ENCODE measurements at regions of chr7 and their contacts with region 1.

Region 1: GRCh38 chr7:134140889-134141867 is 14.0 kb downstream of the LRGUK start:
- DNase-seq: peak; percentile 57
- H3K4me3 ChIP-seq: no peak overlapping the region
- H3K27ac ChIP-seq: no peak overlapping the region
- H3K4me1 ChIP-seq: no peaks in the 10 kb centered on the region
- H3K27me3 ChIP-seq: peaks cover 2% of the 10 kb centered on the region in 2 experiments
- CTCF ChIP-seq: peak; percentile 80 to 94
- POLR2A ChIP-seq: no peak

Region 2: DNA sequence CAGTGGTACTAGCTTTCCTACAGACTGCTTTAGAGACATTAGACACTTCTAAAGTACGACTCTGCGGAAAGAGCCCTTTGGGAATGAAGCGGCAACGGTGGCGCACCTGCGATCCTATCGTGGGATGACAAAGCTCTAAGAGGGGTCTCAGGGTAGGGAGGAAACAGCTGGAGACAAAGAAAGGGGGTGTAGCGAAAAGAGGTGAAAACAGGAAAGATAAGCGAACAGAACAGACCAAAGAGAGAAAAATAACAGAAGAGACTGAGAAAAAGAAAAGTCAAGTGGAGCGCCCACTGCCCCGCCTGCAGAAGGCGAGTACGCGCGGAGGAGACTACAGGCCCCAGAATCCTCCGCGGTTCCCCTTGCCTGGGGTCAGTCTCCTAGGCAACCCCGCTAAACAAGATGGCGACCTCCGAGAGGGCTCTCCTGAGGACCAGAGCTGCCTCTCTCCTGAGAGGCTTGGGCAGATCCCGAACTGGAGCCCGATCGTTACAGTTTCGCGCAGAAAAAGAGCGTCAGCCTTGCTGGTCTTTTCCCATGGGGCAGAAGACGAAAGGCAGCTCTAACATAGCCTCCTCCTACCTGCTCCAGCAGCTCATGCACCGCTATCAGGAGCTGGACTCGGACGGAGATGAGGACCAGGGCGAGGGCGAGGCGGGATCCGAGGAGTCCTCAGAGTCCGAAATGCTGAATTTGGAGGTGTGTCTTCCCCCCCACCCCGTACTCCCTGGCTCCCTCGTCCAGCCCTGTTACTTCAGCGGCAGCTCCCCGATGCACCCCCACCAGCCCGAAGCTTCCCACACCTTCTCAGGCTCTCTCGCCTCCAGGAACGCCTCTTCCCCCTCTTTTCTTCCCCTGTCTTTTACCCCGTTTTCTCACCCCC is 14.0 kb before region 1 on chr7 and contains the start of gene LRGUK:
- CTCF ChIA-PET with region 1: interaction called, 39 read pairs
- POLR2A ChIA-PET with region 1: no interaction called
- dilution Hi-C with region 1: no loop called
- intact Hi-C with region 1: no loop called
- DNase-seq: peak; percentile 73
- H3K4me3 ChIP-seq: peak within 1 kb of the TSS; percentile 20 to 62 (median 46)
- H3K27ac ChIP-seq: no peak within 1 kb of the TSS
- H3K4me1 ChIP-seq: no peaks in the 10 kb centered on the region
- H3K27me3 ChIP-seq: peaks cover 11 to 39% of the 10 kb centered on the region in 2 experiments
- CTCF ChIP-seq: no peak
- POLR2A ChIP-seq: no peak
- total RNA-seq, gene LRGUK: 0.11 TPM in 1 of 2 replicates, not detected in the other

Region 3: DNA sequence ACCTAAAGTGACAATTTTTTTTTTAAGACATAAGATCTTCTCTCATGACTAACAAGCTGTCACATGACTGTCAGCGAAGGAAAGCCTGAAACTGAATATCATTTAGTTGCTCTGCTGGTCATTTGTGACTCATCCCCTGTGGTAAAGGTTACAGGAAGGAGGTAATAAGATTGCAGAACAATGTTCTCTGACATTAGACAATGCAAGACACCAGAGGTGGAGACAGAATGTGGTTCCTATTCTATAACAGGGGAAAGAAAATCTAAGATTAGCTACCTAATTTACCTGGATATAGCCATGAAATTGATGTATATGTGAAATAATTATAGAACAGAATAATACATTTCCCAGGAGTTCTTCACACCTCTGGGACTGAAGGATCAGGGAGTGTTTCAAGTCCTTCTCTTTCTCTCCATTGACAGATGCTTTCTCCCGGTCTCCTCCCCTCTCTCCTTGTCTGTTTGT is 33.7 kb after region 1 on chr7:
- CTCF ChIA-PET with region 1: interaction called, 11 read pairs
- POLR2A ChIA-PET with region 1: no interaction called
- dilution Hi-C with region 1: no loop called
- intact Hi-C with region 1: no loop called
- DNase-seq: peak; percentile 71
- H3K4me3 ChIP-seq: no peak overlapping the region
- H3K27ac ChIP-seq: no peak overlapping the region
- H3K4me1 ChIP-seq: peaks cover 11% of the 10 kb centered on the region
- H3K27me3 ChIP-seq: no peaks in the 10 kb centered on the region
- CTCF ChIP-seq: no peak
- POLR2A ChIP-seq: no peak

Region 4: DNA sequence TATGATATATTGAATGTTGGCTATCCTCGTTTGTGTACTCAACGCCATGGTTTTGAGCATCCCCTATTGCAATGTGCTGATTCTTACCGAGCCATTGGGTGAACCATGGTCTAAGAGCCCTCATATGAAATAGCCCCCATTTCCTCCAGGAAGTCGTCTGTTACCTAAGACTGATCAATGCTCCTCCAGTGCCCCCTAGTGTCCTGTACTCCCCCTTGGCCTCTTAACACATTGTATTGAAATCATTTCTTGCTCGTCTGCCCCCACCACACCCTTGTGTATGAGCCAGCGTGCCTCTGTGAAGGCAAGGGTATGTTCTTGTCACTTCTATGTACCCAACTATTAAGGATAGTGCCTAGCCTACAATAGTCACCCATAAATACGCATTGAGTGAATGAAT is 186.7 kb after region 1 on chr7:
- CTCF ChIA-PET with region 1: interaction called, 7 read pairs
- POLR2A ChIA-PET with region 1: no interaction called
- dilution Hi-C with region 1: no loop called
- intact Hi-C with region 1: loop called (anchors 5 kb)
- DNase-seq: peak; percentile 46
- H3K4me3 ChIP-seq: no peak overlapping the region
- H3K27ac ChIP-seq: no peak overlapping the region
- H3K4me1 ChIP-seq: no peaks in the 10 kb centered on the region
- H3K27me3 ChIP-seq: peaks cover 0 to 25% of the 10 kb centered on the region in 2 experiments
- CTCF ChIP-seq: peak; percentile 46 to 47
- POLR2A ChIP-seq: no peak

Region 5: DNA sequence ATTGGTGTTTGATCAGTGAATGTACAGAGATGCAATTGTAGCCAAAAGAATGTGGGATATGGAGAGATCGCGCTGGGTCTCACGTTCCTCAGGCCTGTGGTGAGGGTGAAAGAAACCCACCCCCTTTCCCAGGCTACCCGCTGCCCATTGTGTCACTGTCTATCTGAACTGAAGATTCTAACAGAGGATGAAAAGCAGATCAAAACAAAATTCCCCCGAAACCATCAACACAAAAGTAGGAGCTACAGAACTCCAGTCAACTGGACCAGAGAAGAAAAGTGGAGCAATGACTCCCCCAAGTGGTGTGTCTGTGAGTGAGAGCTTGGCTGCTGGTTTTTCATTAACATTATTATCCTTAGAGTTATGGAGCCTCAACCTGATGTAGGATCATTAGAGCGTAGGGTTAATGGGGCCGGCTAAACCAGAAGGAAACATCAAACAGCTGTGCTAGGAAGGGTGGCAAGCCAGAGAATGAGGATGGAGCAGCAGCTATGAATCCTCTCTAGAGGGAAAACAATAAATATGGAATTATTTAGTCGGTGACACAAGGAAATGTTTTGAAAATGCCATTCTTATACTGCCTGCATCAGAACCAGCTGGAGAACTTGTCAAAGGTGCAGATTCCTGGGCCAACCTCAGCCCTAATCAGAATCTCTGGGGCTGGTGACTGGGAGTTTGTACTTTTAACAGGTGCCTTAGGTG is 279.4 kb after region 1 on chr7:
- CTCF ChIA-PET with region 1: interaction called, 35 read pairs
- POLR2A ChIA-PET with region 1: no interaction called
- dilution Hi-C with region 1: no loop called
- intact Hi-C with region 1: loop called (anchors 2 kb)
- DNase-seq: peak; percentile 62
- H3K4me3 ChIP-seq: no peak overlapping the region
- H3K27ac ChIP-seq: no peak overlapping the region
- H3K4me1 ChIP-seq: peaks cover 10% of the 10 kb centered on the region
- H3K27me3 ChIP-seq: no peaks in the 10 kb centered on the region
- CTCF ChIP-seq: peak; percentile 57 to 62
- POLR2A ChIP-seq: no peak

Measured in endothelial cell of umbilical vein (primary cell).